ENCODE measurements at regions of chr2 and their contacts with region 1.

Region 1: DNA sequence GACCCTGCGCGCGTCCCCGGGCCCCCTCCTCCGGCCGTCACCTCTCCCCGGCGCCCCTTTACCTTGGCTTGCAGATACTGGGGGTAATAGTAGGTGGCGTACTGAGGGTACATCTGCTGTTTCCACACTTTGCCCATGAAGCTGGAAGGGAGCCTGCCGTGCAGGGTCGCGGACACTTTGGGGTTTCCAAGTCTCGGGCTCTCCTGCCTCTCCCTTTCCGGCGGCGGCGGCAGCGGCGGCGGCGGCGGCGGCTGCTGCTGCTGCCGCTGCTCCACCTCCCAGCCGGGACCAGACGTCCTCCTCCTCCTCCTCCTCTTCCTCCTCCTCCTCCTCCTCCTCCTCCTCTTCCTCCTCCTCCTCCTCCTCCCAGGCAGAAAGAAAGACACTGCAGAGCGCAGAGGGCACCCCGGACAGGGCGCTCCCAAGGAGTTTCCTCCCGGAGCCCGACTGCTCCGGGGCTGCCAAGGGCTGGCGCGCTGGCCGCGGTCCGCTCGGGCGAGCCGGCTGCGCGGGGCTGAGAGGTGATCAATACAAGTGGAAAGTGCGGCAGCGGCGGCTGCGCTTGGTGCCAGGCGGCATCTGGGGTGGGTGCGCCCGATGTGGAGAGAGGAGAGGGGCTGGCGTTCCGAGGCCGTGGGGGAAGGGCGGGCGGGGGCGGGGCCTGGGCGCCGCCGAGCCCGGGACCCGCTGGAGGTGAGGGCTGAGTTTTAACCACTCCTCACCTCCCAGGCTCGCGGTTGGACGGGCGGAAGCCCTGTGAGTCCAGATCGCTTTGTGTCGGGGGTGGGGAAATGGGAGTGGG is at the start of gene RBMS1:
- DNase-seq: peak; percentile 44
- ATAC-seq: peak; percentile 47
- H3K4me3 ChIP-seq: peak within 1 kb of the TSS; percentile 98
- H3K27ac ChIP-seq: peak within 1 kb of the TSS; percentile 100
- H3K4me1 ChIP-seq: peaks cover 6% of the 10 kb centered on the region
- H3K27me3 ChIP-seq: no peaks in the 10 kb centered on the region
- CTCF ChIP-seq: no peak
- POLR2A ChIP-seq: no peak
- RAD21 ChIP-seq: peak; percentile 26; the same call in 1 of the 2 replicates
- total RNA-seq, gene RBMS1: 64.9 and 73.6 TPM in 2 replicates

Region 2: DNA sequence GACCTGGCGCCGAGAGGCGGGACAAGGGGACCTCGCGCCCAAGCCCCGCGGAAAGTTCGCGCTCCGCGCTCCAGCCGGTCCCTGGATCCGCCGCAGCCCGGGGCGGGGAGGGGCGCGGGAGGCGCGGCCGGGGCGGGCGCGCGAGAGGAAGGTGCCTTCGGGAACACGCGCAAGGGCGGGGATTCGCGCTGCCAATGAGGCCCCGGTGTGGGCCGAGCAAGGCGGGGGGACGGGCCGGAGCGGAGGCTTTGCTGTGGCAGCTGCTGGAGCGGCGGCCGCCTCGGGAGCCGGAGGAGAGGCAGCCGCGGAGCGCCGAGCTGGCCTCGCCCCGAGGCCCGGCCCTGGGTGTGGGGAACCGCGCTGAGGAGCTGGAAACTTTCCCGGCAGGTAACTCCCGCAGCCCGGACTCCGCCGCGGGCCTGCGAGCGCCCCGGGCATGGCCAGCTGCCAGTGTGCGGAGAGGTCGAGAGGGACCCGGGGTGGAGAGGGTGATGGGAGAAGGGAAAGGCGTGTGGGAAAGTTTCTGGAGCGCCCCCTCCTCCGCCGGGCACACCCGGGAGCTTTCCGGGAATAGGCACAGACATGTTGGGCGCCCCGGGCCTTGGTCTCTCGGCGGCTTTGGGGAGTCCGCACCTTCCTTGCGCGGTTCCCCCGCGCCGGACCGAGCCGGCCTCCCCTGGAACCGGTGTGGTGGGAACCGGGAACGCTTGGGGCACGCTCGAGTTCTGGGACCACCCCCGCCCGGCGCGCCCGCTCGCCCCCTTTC is 1524.8 kb before region 1 on chr2 and contains the start of gene TANC1:
- CTCF ChIA-PET with region 1: no interaction called
- POLR2A ChIA-PET with region 1: no interaction called
- dilution Hi-C with region 1: no loop called
- in situ Hi-C with region 1: no loop called
- intact Hi-C with region 1: no loop called
- DNase-seq: peak; percentile 90
- ATAC-seq: peak; percentile 93
- H3K4me3 ChIP-seq: peak within 1 kb of the TSS; percentile 87
- H3K27ac ChIP-seq: peak within 1 kb of the TSS; percentile 90
- H3K4me1 ChIP-seq: peaks cover 10% of the 10 kb centered on the region
- H3K27me3 ChIP-seq: no peaks in the 10 kb centered on the region
- CTCF ChIP-seq: no peak
- POLR2A ChIP-seq: peak; percentile 88
- RAD21 ChIP-seq: no peak; the same call in 1 of the 2 replicates
- total RNA-seq, gene TANC1: 12.8 and 12.9 TPM in 2 replicates

Region 3: GRCh38 chr2:160406591-160407392 is 86.6 kb before region 1 on chr2:
- CTCF ChIA-PET with region 1: no interaction called
- POLR2A ChIA-PET with region 1: no interaction called
- dilution Hi-C with region 1: no loop called
- in situ Hi-C with region 1: no loop called
- intact Hi-C with region 1: loop called (anchors 2 kb)
- DNase-seq: peak; percentile 80
- ATAC-seq: peak; percentile 12
- H3K4me3 ChIP-seq: peak overlapping the region; percentile 99
- H3K27ac ChIP-seq: peak overlapping the region; percentile 89
- H3K4me1 ChIP-seq: peaks cover 35% of the 10 kb centered on the region
- H3K27me3 ChIP-seq: no peaks in the 10 kb centered on the region
- CTCF ChIP-seq: no peak
- POLR2A ChIP-seq: peak; percentile 49
- RAD21 ChIP-seq: 0 out of 2 replicates have a peak, but pooled peaks have one; percentile 1

Region 4: GRCh38 chr2:160450486-160450885 is 42.9 kb before region 1 on chr2:
- CTCF ChIA-PET with region 1: no interaction called
- POLR2A ChIA-PET with region 1: no interaction called
- dilution Hi-C with region 1: no loop called
- in situ Hi-C with region 1: no loop called
- intact Hi-C with region 1: no loop called
- DNase-seq: no peak
- ATAC-seq: no peak
- H3K4me3 ChIP-seq: no peak overlapping the region
- H3K27ac ChIP-seq: no peak overlapping the region
- H3K4me1 ChIP-seq: peaks cover 7% of the 10 kb centered on the region
- H3K27me3 ChIP-seq: no peaks in the 10 kb centered on the region
- CTCF ChIP-seq: no peak
- POLR2A ChIP-seq: no peak
- RAD21 ChIP-seq: no peak

Region 5: GRCh38 chr2:160582490-160583145 is 89.2 kb after region 1 on chr2:
- CTCF ChIA-PET with region 1: no interaction called
- POLR2A ChIA-PET with region 1: no interaction called
- dilution Hi-C with region 1: no loop called
- in situ Hi-C with region 1: no loop called
- intact Hi-C with region 1: loop called (anchors 2 kb)
- DNase-seq: peak; percentile 75
- ATAC-seq: peak; percentile 81
- H3K4me3 ChIP-seq: no peak overlapping the region
- H3K27ac ChIP-seq: peak overlapping the region; percentile 70; the same call in 1 of the 2 replicates
- H3K4me1 ChIP-seq: peaks cover 18% of the 10 kb centered on the region
- H3K27me3 ChIP-seq: no peaks in the 10 kb centered on the region
- CTCF ChIP-seq: 0 out of 2 replicates have a peak, but pooled peaks have one; percentile 2
- POLR2A ChIP-seq: no peak
- RAD21 ChIP-seq: no peak

Region 6: DNA sequence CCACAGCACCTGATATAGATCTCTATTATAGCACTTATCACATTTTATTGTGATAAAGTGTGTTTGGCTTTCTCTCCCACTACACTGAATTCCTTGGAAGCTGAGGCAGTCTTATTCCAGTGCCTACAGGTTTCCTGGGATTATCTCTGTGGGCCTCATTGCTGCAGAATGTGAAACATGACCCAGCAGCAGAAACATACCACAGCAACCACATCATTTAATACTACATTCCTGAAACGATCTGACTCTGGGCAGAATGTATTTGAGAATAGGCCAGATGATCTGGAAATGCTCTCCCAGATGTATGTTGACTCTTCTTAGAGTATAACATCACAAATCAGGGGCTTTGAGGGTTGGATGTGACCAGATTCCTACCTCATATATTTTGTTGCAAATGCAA is 343.3 kb after region 1 on chr2:
- CTCF ChIA-PET with region 1: no interaction called
- POLR2A ChIA-PET with region 1: no interaction called
- dilution Hi-C with region 1: no loop called
- in situ Hi-C with region 1: no loop called
- intact Hi-C with region 1: loop called (anchors 5 kb)
- DNase-seq: peak; percentile 96
- ATAC-seq: peak; percentile 97
- H3K4me3 ChIP-seq: no peak overlapping the region
- H3K27ac ChIP-seq: peak overlapping the region; percentile 76; the same call in 1 of the 2 replicates
- H3K4me1 ChIP-seq: peaks cover 5% of the 10 kb centered on the region
- H3K27me3 ChIP-seq: no peaks in the 10 kb centered on the region
- CTCF ChIP-seq: no peak
- POLR2A ChIP-seq: no peak
- RAD21 ChIP-seq: no peak

Region 7: DNA sequence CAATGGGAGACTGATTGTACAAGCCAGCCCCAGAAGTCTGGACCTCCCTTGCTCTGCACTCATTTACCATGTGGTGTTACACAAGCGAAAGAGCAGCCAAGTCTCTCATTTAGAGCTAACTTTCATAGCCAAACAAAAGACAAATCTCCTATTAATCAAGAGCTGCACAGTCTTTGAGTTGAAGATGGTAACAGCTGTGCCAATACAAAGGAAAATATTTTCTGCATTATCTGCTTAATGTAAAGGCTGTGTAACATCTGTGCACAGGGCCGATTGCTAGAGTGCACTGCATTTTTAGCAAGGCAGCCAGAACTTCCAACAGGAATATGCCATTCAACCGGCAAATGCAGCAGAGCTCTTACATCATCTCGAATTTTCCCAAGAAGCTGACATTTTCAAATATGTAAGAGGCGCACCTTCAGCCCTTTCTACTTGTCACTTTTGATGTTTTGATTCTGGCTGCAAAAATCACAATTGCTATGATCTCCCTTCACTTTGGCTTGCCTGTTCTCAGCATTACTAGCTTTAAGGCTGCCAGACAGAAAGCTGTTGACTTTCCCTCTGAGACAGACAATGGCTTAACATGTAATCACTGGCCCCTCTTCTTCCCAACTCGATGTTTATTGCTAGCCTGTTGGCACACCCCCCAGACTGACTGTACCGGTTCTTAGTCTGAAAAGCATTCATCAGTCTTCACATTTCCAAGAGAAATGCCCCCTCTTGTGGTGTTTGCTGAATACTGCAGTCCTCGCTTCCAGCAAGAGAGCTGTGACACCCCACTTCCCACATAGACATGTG is 569.9 kb after region 1 on chr2:
- CTCF ChIA-PET with region 1: no interaction called
- POLR2A ChIA-PET with region 1: interaction called, 3 read pairs
- dilution Hi-C with region 1: no loop called
- in situ Hi-C with region 1: no loop called
- intact Hi-C with region 1: loop called (anchors 2 kb)
- DNase-seq: peak; percentile 86
- ATAC-seq: peak; percentile 95
- H3K4me3 ChIP-seq: no peak overlapping the region
- H3K27ac ChIP-seq: no peak overlapping the region
- H3K4me1 ChIP-seq: peaks cover 6% of the 10 kb centered on the region
- H3K27me3 ChIP-seq: no peaks in the 10 kb centered on the region; the same call in 1 of the 2 replicates
- CTCF ChIP-seq: peak; percentile 90
- POLR2A ChIP-seq: peak; percentile 41; the same call in 1 of the 2 replicates
- RAD21 ChIP-seq: peak; percentile 92

Measured in IMR-90 (cell line).